ENCODE measurements at regions of chr3 and their contacts with region 1.

Region 1: GRCh38 chr3:52705688-52706686 is at the starts of genes GLT8D1 and SPCS1:
- DNase-seq: peak; percentile 71 to 94 (median 85)
- ATAC-seq: peak; percentile 89
- H3K4me3 ChIP-seq: peak within 1 kb of the TSS; percentile 92
- H3K4me3 Mint-ChIP-seq: peak within 1 kb of the TSS; percentile 94
- H3K27ac ChIP-seq: peak within 1 kb of the TSS; percentile 73 to 90
- H3K27ac Mint-ChIP-seq: peak within 1 kb of the TSS; percentile 96
- H3K4me1 ChIP-seq: peaks cover 33% of the 10 kb centered on the region
- H3K4me1 Mint-ChIP-seq: peaks cover 38% of the 10 kb centered on the region
- H3K27me3 ChIP-seq: no peaks in the 10 kb centered on the region
- H3K27me3 Mint-ChIP-seq: no peaks in the 10 kb centered on the region
- CTCF ChIP-seq: no peak
- total RNA-seq, gene GLT8D1: 9.3 to 11.3 TPM
- total RNA-seq, gene SPCS1: 58.5 to 59.6 TPM

Region 2: DNA sequence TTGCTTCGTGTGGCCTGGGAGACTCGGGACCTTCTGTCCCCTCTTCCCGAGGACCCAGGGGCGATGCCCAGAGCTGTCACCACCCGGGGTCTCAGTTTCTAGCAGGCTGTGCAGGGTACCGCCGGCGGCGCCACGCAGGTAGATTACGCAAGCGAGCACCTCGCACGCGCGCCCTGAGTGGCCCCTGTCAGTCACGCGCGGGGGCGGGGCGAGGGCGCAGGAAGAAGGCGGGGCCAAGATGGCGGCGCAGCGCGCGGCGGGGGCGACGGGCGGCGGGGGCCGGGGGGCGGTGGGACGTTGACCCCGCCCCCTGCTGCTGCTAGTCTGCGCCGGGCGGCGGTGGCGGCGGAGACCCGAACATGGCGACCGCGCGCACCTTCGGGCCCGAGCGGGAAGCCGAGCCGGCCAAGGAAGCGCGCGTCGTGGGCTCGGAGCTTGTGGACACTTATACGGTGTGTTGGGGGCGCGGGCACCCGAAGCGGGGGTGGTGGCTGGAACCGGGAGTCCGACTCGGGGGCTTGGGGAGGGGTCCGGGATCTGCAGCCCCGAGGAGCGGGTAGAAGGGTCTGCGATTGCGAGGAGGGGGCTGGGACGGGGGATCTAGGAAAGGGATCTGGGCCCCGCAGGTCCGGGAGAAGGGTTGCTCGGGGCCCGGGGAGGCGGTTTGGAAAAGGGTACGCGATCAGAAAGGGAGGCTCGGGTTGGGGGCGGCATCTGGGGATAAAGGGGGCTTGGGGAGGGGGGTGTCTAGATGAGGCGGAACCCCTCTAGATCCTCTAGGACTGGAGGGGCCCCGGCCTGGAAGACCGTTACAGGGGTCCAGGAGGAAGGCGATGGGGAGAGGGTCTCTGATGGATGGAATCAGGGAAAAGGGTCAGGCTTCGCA is 250.5 kb before region 1 on chr3 and contains the start of gene NISCH:
- CTCF ChIA-PET with region 1: no interaction called
- POLR2A ChIA-PET with region 1: no interaction called
- intact Hi-C with region 1: loop called in 1 of 2 experiments (anchors 10 kb)
- DNase-seq: peak; percentile 92 to 99 (median 96)
- ATAC-seq: peak; percentile 94
- H3K4me3 ChIP-seq: peak within 1 kb of the TSS; percentile 86 to 97
- H3K4me3 Mint-ChIP-seq: peak within 1 kb of the TSS; percentile 91
- H3K27ac ChIP-seq: peak within 1 kb of the TSS; percentile 90 to 97
- H3K27ac Mint-ChIP-seq: peak within 1 kb of the TSS; percentile 99
- H3K4me1 ChIP-seq: peaks cover 26% of the 10 kb centered on the region
- H3K4me1 Mint-ChIP-seq: peaks cover 43% of the 10 kb centered on the region
- H3K27me3 ChIP-seq: no peaks in the 10 kb centered on the region
- H3K27me3 Mint-ChIP-seq: no peaks in the 10 kb centered on the region
- CTCF ChIP-seq: no peak
- total RNA-seq, gene NISCH: 150 to 163 TPM

Region 3: DNA sequence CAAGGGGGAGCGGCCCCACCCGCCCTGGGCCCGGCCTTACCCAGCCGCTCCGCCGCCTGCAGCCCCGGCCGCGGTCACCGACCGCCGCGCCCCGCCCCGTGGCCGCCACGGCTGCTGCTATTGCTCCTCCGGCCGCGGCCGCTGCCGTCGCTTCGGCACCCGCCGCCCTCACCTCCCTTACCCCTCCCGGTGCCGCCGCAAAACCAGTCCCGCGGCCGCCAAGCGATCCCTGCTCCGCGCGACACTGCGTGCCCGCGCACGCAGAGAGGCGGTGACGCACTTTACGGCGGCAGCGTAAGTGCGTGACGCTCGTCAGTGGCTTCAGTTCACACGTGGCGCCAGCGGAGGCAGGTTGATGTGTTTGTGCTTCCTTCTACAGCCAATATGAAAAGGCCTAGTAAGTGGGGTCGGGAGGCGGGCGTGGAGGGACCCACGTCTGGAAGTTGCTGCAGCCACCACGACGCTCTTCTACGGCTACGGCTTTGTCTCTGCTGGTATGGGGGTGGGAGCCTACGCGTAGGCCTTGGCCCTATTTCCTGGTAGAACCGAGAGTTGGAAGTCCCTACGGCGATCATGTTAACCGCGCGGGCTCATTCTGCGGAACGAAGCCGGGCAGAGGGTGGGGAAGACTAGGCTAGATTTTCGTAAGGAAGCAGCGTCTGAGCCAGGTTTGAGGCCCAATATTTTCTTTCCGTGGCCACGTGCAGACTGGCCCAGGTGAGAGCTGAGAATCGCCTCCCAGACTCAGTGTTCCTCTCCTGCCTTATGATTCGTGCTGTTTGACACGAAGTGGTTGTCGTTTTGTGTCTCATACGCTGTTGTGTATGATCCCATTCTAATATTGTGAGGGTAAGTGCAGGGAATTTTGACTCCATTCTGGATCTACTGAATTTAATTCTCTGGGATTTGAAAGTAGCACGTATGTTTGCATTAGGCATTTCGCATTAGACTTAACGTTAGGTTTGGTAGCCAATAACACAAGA is 20.0 kb before region 1 on chr3 and contains the starts of genes GNL3 and PBRM1:
- CTCF ChIA-PET with region 1: interaction called, 4 read pairs
- POLR2A ChIA-PET with region 1: interaction called, 11 read pairs
- intact Hi-C with region 1: loop called (anchors 1 kb)
- DNase-seq: peak; percentile 85 to 98 (median 90)
- ATAC-seq: peak; percentile 90
- H3K4me3 ChIP-seq: peak within 1 kb of the TSS; percentile 63 to 83
- H3K4me3 Mint-ChIP-seq: peak within 1 kb of the TSS; percentile 99
- H3K27ac ChIP-seq: peak within 1 kb of the TSS; percentile 61 to 91
- H3K27ac Mint-ChIP-seq: peak within 1 kb of the TSS; percentile 98
- H3K4me1 ChIP-seq: peaks cover 22% of the 10 kb centered on the region
- H3K4me1 Mint-ChIP-seq: peaks cover 59% of the 10 kb centered on the region
- H3K27me3 ChIP-seq: no peaks in the 10 kb centered on the region
- H3K27me3 Mint-ChIP-seq: no peaks in the 10 kb centered on the region
- CTCF ChIP-seq: no peak
- total RNA-seq, gene GNL3: 110 to 113 TPM
- total RNA-seq, gene PBRM1: 45.9 to 49.2 TPM

Region 4: GRCh38 chr3:52721002-52721729 is 15.2 kb after region 1 on chr3:
- CTCF ChIA-PET with region 1: no interaction called
- POLR2A ChIA-PET with region 1: interaction called, 16 read pairs
- intact Hi-C with region 1: no loop called
- DNase-seq: peak in 4 of 9 experiments; percentile 11 to 49 (median 24)
- ATAC-seq: peak; percentile 78
- H3K4me3 ChIP-seq: no peak overlapping the region
- H3K4me3 Mint-ChIP-seq: peak overlapping the region; percentile 68
- H3K27ac ChIP-seq: peak overlapping the region; percentile 9 to 44
- H3K27ac Mint-ChIP-seq: peak overlapping the region; percentile 92
- H3K4me1 ChIP-seq: peaks cover 25% of the 10 kb centered on the region
- H3K4me1 Mint-ChIP-seq: peaks cover 24% of the 10 kb centered on the region
- H3K27me3 ChIP-seq: no peaks in the 10 kb centered on the region
- H3K27me3 Mint-ChIP-seq: no peaks in the 10 kb centered on the region
- CTCF ChIP-seq: no peak

Region 5: DNA sequence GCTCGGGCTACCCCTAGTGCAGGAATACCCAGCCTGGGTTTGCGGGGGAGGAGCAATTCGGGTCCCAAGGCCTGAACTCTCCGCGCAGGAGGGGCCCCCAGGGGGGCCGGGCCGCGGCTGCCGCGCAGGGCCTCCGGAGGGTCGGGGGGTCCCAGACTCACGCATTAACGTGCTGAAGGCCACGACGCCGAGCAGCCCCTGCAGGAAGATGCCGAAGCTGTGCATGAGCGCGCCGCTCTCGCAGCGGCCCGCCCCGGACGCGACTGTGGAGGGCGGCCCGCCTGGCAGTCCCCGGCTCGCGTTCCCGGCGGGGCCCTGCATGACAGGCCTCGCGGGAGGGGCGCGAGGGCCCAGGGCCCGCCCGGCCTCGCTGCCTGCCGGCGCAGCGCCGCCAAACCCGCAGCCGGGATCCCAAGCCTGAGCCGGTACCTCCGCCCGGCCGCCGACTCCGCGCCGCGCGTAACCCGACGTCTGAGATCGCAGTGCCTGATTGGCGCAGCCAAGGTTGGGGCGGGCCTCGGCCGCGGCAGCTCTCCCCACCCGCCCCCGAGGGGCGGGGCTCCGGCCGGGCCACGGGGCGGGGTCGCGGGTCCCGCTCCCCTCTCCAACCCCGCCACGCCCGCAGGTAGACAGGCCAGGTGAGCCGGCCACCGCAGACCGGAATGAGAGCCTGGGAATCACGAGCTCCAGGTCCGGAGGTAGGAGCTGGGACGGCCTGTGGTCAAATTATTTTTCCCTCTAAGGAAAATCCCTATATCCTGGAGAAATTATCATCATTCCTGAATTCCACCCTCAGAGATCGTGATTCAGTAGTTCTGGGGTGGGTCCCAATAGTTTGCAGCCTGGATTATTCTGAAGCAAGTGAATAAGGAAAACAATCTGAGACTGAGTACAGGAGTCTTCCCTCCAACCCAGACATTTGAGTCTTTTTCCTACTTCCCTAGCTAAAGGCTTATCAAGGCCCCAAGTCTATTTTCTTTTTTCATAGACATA is 191.4 kb after region 1 on chr3 and contains the start of gene STIMATE:
- CTCF ChIA-PET with region 1: no interaction called
- POLR2A ChIA-PET with region 1: no interaction called
- intact Hi-C with region 1: loop called (anchors 2 to 5 kb)
- DNase-seq: peak; percentile 71 to 94 (median 86)
- ATAC-seq: peak; percentile 93
- H3K4me3 ChIP-seq: peak within 1 kb of the TSS; percentile 70 to 85
- H3K4me3 Mint-ChIP-seq: peak within 1 kb of the TSS; percentile 90
- H3K27ac ChIP-seq: peak within 1 kb of the TSS; percentile 23 to 49
- H3K27ac Mint-ChIP-seq: peak within 1 kb of the TSS; percentile 80
- H3K4me1 ChIP-seq: peaks cover 22% of the 10 kb centered on the region
- H3K4me1 Mint-ChIP-seq: peaks cover 48% of the 10 kb centered on the region
- H3K27me3 ChIP-seq: no peaks in the 10 kb centered on the region
- H3K27me3 Mint-ChIP-seq: no peaks in the 10 kb centered on the region
- CTCF ChIP-seq: no peak
- total RNA-seq, gene STIMATE: 29.1 to 35.9 TPM

Region 6: DNA sequence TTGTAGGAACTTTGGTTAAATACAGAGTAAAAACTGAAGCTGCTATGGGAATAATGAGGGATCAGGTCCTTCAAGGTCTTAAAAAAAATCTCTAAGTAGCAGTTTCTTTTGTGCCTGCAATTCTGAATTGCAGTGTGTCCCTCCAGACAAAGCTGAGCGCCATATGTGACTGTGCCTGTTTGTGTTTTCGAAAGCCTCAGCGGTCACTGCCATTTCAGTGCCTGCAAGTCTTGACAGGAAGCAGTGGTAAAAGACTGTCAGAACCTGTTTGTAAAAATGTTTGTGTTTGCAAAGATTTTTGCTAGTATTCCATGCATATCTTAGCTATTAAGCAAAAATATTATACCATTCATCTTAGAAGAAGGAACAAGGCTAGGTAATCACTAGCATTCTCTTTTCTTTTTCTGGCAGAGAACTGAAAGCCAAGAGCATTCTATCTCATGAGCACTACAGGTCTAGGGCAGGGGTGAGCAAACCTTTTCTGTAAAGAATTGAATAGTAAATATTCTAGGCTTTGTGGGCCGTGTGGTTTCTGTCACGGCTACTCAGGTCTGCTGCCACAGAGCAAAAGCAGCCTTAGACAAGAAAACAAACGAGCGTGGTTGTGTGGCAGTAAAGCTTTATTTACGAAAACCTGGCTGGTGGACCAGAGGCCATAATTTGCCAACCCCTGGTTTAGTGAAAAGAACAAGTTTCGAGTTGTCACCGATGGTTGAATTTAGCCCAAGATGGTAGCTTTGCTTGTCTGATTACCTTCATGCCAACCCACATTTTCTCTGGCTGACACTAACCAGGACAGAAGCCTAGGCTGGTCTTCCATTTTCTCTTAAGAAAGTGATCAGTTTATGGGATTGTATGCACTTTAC is 922.8 kb after region 1 on chr3:
- CTCF ChIA-PET with region 1: no interaction called
- POLR2A ChIA-PET with region 1: no interaction called
- intact Hi-C with region 1: no loop called
- DNase-seq: peak in 1 of 9 experiments; percentile 3
- ATAC-seq: no peak
- H3K4me3 ChIP-seq: no peak overlapping the region
- H3K4me3 Mint-ChIP-seq: no peak overlapping the region
- H3K27ac ChIP-seq: peak overlapping the region in 1 of 2 experiments; percentile 43
- H3K27ac Mint-ChIP-seq: peak overlapping the region; percentile 16
- H3K4me1 ChIP-seq: no peaks in the 10 kb centered on the region
- H3K4me1 Mint-ChIP-seq: no peaks in the 10 kb centered on the region
- H3K27me3 ChIP-seq: no peaks in the 10 kb centered on the region
- H3K27me3 Mint-ChIP-seq: peaks cover 24% of the 10 kb centered on the region
- CTCF ChIP-seq: no peak

Measured in CD8-positive, alpha-beta T cell (primary cell).